K562 (cell line): ENCODE measurements at regions of chrX and their contacts with region 1.

Region 1: DNA sequence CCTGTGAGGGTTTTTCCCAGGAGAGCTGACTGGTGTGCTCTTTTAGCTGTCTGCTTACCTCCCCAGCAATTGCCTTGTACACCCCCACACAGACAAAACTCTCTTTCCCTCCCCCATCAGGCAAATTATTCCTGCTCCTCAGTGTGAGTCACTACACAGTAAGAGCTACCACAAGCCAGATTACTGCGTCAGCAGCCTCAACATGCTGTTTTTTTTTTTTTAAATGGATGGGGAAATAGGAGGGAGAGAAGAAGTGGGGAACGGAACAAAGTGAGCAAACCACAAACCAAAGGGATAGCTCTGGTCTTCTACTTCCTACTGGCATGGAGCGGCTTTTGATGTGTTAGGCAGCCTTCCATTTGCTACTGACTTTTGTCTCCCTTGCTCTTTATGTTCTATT is 107.5 kb upstream of the ACSL4 start:
- DNase-seq: peak; percentile 47 to 82 (median 60)
- ATAC-seq: peak; percentile 83
- H3K4me3 ChIP-seq: no peak overlapping the region
- H3K27ac ChIP-seq: peak overlapping the region; percentile 75
- H3K4me1 ChIP-seq: peaks cover 0 to 31% of the 10 kb centered on the region in 2 experiments; a peak in 3 of 5 replicates
- H3K27me3 ChIP-seq: no peaks in the 10 kb centered on the region
- CTCF ChIP-seq: no peak
- EP300 ChIP-seq: peak; percentile 59; the same call in 1 of the 2 replicates
- POLR2A ChIP-seq: no peak
- RAD21 ChIP-seq: no peak

Region 2: GRCh38 chrX:109709129-109709631 is 131.4 kb before region 1 on chrX:
- CTCF ChIA-PET with region 1: interaction called, 3 read pairs
- POLR2A ChIA-PET with region 1: no interaction called
- in situ Hi-C with region 1: no loop called
- intact Hi-C with region 1: loop called (anchors 1 kb)
- DNase-seq: no peak
- ATAC-seq: no peak
- H3K4me3 ChIP-seq: no peak overlapping the region
- H3K27ac ChIP-seq: no peak overlapping the region
- H3K4me1 ChIP-seq: no peaks in the 10 kb centered on the region; a peak in 2 of 5 replicates
- H3K27me3 ChIP-seq: no peaks in the 10 kb centered on the region
- CTCF ChIP-seq: no peak
- EP300 ChIP-seq: no peak
- POLR2A ChIP-seq: no peak
- RAD21 ChIP-seq: no peak

Region 3: GRCh38 chrX:109732780-109733657 is 107.6 kb before region 1 on chrX and contains the start of gene ACSL4:
- CTCF ChIA-PET with region 1: no interaction called
- POLR2A ChIA-PET with region 1: no interaction called
- in situ Hi-C with region 1: no loop called
- intact Hi-C with region 1: loop called (anchors 5 kb)
- DNase-seq: peak; percentile 88 to 91 (median 90)
- ATAC-seq: peak; percentile 95
- H3K4me3 ChIP-seq: peak within 1 kb of the TSS; percentile 95
- H3K27ac ChIP-seq: peak within 1 kb of the TSS; percentile 90
- H3K4me1 ChIP-seq: peaks cover 7 to 12% of the 10 kb centered on the region in 2 experiments; a peak in 3 of 5 replicates
- H3K27me3 ChIP-seq: no peaks in the 10 kb centered on the region
- CTCF ChIP-seq: no peak
- EP300 ChIP-seq: no peak; the same call in none of the 2 replicates
- POLR2A ChIP-seq: peak; percentile 78
- RAD21 ChIP-seq: no peak
- polyA plus RNA-seq, gene ACSL4: 9.8 to 12.0 TPM

Region 4: GRCh38 chrX:109782994-109783700 is 57.4 kb before region 1 on chrX:
- CTCF ChIA-PET with region 1: no interaction called
- POLR2A ChIA-PET with region 1: no interaction called
- in situ Hi-C with region 1: no loop called
- intact Hi-C with region 1: loop called (anchors 5 kb)
- DNase-seq: no peak
- ATAC-seq: no peak
- H3K4me3 ChIP-seq: no peak overlapping the region
- H3K27ac ChIP-seq: no peak overlapping the region
- H3K4me1 ChIP-seq: no peaks in the 10 kb centered on the region; a peak in 1 of 5 replicates
- H3K27me3 ChIP-seq: no peaks in the 10 kb centered on the region
- CTCF ChIP-seq: no peak
- EP300 ChIP-seq: no peak
- POLR2A ChIP-seq: no peak
- RAD21 ChIP-seq: no peak

Region 5: GRCh38 chrX:109890895-109891502 is 50.4 kb after region 1 on chrX:
- CTCF ChIA-PET with region 1: no interaction called
- POLR2A ChIA-PET with region 1: no interaction called
- in situ Hi-C with region 1: no loop called
- intact Hi-C with region 1: no loop called
- DNase-seq: peak; percentile 68 to 83 (median 70)
- ATAC-seq: peak; percentile 88
- H3K4me3 ChIP-seq: no peak overlapping the region
- H3K27ac ChIP-seq: no peak overlapping the region
- H3K4me1 ChIP-seq: peaks cover 7 to 21% of the 10 kb centered on the region in 2 experiments; a peak in 4 of 5 replicates
- H3K27me3 ChIP-seq: no peaks in the 10 kb centered on the region
- CTCF ChIP-seq: peak; percentile 83 to 90 (median 84)
- EP300 ChIP-seq: no peak
- POLR2A ChIP-seq: no peak
- RAD21 ChIP-seq: peak; percentile 57 to 77

Region 6: DNA sequence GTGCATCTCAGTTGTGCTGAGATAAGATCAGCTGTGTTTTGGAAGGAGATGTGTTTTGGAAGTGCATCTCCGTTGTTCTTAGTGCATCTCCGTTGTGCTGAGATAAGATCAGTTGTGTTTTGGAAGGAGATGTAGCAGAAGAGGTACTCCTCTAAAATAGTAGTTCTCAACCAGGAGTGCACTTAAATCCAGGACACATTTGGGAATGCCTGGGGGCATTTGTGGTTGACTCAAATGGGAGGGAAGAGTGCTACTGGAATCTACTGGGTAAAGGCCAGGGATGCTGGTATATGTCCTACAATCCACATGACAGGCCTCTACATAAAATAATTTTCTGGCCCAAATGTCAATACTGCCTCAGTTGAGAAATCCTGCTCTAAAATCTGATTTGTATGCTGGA is 1025.8 kb after region 1 on chrX:
- CTCF ChIA-PET with region 1: no interaction called
- POLR2A ChIA-PET with region 1: no interaction called
- in situ Hi-C with region 1: no loop called
- intact Hi-C with region 1: no loop called
- DNase-seq: no peak
- ATAC-seq: no peak
- H3K4me3 ChIP-seq: no peak overlapping the region
- H3K27ac ChIP-seq: no peak overlapping the region
- H3K4me1 ChIP-seq: no peaks in the 10 kb centered on the region
- H3K27me3 ChIP-seq: no peaks in the 10 kb centered on the region
- CTCF ChIP-seq: no peak
- EP300 ChIP-seq: no peak
- POLR2A ChIP-seq: no peak
- RAD21 ChIP-seq: no peak